ENCODE measurements at regions of chr4 and their contacts with region 1.

Region 1: DNA sequence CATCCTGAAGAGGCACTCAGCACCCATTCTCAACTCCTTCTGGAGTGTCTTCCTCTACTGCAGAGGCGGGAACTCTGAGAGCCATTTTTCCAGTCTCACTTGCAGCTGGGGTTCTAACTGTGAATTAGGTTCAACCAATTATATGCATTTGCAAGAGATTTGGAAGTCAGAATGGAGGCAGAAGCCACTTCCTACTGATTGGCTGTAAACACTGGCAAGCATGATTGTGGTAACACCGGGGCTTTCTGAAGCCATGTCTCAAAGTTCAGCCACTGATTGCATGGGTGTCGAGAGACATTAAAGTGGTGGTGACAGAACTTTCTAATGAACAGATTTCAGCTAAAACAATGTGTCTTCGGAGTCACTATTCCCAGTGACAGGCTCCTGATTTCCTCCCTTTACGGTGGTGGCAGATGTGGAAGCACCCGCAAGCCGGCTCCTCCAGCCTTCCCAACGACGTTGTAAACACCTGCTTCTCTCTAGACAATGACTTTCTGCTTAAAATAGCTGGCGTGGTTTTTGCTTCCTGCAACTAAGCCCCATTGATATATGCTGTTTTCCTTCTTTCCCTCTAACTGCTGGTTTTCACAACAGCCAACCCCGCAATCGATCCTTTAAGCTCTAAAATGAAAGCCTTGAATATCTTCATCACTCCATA is 92.0 kb downstream of the IRF2 start:
- DNase-seq: peak in 2 of 3 donors; percentile 36 to 42
- H3K4me3 ChIP-seq: peak overlapping the region in 6 of 7 experiments; percentile 29 to 70 (median 48)
- H3K27ac ChIP-seq: no peak overlapping the region
- H3K4me1 ChIP-seq: peaks cover 51 to 61% (median 53%) of the 10 kb centered on the region in 4 experiments
- H3K27me3 ChIP-seq: no peaks in the 10 kb centered on the region

Region 2: DNA sequence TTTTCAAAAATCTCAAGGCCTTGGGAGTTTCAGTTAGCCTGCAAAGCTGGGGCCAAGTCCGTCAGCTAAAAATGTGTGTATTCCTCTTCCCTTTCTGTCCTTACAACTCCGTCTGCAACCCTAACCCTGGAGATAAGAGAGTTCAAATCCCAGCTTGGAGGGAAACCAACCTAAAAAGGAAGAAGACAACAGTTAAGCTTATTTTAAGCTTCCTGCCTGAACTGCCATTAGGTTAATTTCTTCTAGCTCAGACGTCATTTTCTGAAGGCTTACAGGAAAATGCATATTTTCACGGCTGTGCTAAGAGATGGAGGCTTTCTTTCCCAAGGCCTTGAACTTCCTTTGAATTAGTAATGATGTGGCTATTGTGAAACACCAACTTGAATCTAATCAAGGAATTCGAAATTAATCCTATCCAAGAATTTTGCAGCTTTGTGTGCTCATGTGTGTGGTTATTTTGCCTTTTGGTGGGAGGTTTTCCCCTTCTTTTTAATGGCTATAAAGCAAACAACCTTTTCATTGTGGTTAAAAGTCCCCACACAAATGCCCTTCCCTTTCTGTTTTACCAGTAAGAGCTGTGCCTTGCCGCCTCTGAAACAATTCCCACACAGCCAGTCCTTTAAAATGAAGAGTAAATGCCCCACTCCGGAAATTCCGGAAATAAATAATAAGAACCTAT is 11.5 kb before region 1 on chr4:
- CTCF ChIA-PET with region 1: interaction called, 10 read pairs
- POLR2A ChIA-PET with region 1: no interaction called
- DNase-seq: peak in 2 of 3 donors; percentile 44 to 46
- H3K4me3 ChIP-seq: no peak overlapping the region
- H3K27ac ChIP-seq: peak overlapping the region in 1 of 2 experiments; percentile 54
- H3K4me1 ChIP-seq: peaks cover 0 to 20% (median 11%) of the 10 kb centered on the region in 4 experiments
- H3K27me3 ChIP-seq: no peaks in the 10 kb centered on the region

Measured in common myeloid progenitor, CD34-positive (primary cell).